Right ventricle myocardium inferior (tissue), 1 donor: ENCODE measurements at regions of chr9 and their contacts with region 1.

Region 1: GRCh38 chr9:100598641-100599145 is 20.8 kb downstream of the CAVIN4 start:
- DNase-seq: peak; percentile 91
- ATAC-seq: peak; percentile 76

Region 2: DNA sequence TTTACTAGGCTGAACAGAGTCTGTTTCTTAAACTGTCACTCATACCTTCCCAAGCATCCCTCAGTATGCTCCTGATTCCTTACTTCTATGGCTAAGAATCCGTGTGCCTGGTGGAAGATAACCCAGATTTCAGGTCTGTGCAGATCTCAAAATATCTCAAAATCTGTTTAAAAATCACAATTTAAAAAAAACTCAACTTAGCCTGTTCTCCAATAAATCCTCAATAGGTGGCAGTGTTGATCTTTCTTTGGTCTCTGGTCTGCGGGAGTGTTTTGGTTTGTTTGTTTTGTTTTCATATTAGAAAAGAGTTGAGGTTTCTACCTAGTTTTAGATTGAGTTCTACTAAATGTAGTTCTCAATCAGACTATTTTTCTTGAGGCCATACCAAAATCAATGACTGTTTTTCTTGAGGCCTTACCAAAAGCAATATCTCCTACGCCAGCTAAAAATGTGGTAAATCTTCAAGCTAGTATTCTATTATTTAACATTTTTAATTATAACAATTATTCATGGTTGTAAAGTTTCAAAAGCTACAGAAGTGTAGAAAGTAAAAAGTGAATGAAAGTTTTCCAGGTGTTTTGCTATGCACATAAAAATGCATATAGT is 1435.8 kb before region 1 on chr9:
- intact Hi-C with region 1: loop called (anchors 10 kb)
- DNase-seq: no peak
- ATAC-seq: no peak

Region 3: GRCh38 chr9:100129772-100130171 is 468.9 kb before region 1 on chr9:
- intact Hi-C with region 1: loop called (anchors 10 kb)
- DNase-seq: no peak
- ATAC-seq: no peak

Region 4: GRCh38 chr9:100352727-100353505 is 245.8 kb before region 1 on chr9 and contains the start of gene TEX10:
- intact Hi-C with region 1: loop called (anchors 10 kb)
- DNase-seq: peak; percentile 96
- ATAC-seq: peak; percentile 98
- total RNA-seq, gene TEX10: 7.5 TPM

Region 5: DNA sequence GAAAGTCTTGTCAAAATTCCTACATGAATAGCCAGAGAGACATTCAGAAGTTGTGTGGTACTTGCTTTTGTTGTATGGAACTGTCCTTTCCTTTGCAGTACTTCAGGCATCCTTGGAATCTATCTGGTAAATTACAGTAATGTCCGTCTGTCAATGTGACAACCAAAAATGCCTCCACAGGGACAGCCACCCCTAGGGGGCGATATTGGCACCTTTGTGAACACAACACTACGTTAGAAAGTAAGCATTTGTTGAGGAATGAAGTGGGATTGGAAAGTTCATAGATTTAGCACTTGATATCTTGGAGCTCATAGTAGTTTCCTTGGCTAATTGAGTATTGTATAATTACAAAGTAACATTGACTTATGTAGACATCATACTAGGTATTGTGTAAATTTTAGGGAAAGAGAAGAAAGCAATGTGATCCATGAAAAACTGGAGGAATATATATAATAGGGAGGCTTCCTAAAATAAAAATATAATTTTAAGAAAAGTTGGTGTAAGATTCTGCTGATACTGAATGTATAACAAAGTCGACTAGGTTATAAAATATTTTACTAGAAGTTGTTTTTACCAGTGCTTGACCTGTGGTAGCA is 93.0 kb before region 1 on chr9:
- intact Hi-C with region 1: loop called (anchors 2 kb)
- DNase-seq: no peak
- ATAC-seq: no peak

Region 6: GRCh38 chr9:101311758-101312420 is 713.2 kb after region 1 on chr9:
- intact Hi-C with region 1: loop called (anchors 2 kb)
- DNase-seq: no peak
- ATAC-seq: no peak